ENCODE measurements at regions of chr12 and their contacts with region 1.

Region 1: DNA sequence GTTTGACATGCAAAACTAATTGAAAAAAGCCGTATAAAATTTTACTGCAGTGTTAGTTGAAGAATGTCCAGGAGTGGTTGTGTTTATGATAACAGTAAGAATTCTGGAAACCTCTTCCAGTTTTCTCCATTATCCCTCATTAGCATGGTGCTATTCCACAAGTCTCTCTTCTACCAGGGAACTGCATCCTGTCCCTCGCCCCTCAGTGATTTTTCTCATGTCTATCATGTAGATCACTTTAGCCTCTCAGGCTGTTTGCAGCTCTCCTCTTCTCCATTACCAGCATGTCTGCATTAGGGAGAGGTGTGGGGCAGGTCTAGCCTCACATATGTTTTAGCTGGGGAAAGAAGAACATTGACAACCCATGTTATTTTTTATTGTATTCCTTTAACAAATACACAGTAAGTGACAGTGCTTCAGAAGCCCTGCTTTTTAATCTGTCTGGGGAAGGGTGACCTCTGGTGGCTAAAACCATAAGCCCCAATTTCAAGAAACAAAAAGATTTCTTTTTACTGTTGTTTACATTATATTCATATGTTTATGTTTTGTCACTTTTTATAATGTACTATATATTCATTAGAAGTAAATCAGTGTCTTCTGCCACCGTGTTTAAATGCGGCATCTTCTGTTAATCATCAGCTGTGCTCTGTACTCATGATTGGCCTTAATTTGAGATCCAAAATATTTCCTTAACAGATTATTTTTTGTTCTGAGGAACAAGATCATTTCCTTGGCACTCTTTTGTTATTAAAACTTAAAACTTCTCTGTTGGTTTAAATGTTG is 70.7 kb downstream of the RASSF8 start:
- DNase-seq: peak; percentile 25
- H3K4me3 ChIP-seq: no peak overlapping the region
- H3K27ac ChIP-seq: no peak overlapping the region
- H3K4me1 ChIP-seq: no peaks in the 10 kb centered on the region
- H3K27me3 ChIP-seq: no peaks in the 10 kb centered on the region
- CTCF ChIP-seq: peak; percentile 77 to 82

Region 2: DNA sequence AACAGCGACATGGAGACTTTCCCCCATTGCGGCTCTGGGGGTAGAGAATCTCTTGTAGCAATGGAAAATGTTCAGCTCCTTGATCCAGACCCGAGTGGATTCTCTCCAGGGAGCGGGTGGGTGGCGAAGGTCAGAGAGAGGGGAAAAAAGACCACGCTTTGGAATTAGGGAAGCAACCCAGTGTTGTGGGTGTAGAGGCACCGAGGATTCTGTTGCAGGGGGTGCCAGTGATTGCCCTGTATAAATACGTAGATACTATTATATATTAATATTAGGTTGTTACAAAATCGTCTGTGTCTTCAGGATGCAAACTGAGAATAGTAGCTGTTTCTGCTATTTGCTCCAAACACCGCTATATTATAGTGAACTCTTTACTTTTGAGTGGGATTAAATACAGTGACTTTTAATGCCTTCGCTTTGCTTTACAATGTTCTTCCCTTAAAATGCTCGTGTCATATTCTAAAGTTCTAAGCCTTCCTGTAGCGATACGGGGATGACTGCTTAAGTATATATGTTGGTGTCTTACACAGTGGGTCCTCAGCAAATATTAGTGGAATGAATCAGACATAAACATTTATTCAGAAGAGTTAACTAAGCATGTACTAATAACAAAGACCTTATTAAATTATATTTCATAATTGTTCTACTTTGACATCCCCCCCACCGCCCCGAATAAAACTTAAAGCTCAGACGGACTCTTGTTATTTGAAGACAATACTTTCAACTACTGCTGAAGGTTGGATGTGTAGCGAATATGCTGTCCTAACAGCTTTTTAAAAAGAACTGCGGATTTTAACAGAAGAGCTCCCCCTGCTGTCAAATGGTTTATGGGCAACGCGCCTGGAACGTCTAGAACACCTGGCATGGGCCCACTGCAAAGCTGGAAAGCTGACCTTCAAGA is 642.1 kb before region 1 on chr12:
- CTCF ChIA-PET with region 1: no interaction called
- dilution Hi-C with region 1: no loop called
- in situ Hi-C with region 1: no loop called
- intact Hi-C with region 1: loop called (anchors 1 kb)
- DNase-seq: peak; percentile 72
- H3K4me3 ChIP-seq: peak overlapping the region; percentile 53 to 98 (median 74)
- H3K27ac ChIP-seq: peak overlapping the region; percentile 95
- H3K4me1 ChIP-seq: peaks cover 10% of the 10 kb centered on the region
- H3K27me3 ChIP-seq: no peaks in the 10 kb centered on the region
- CTCF ChIP-seq: peak; percentile 74 to 82

Region 3: GRCh38 chr12:25436203-25437030 is 592.7 kb before region 1 on chr12:
- CTCF ChIA-PET with region 1: no interaction called
- dilution Hi-C with region 1: loop called (anchors 10 kb)
- in situ Hi-C with region 1: loop called (anchors 10 kb)
- intact Hi-C with region 1: loop called (anchors 1 kb)
- DNase-seq: peak; percentile 56
- H3K4me3 ChIP-seq: peak overlapping the region; percentile 3 to 46 (median 24)
- H3K27ac ChIP-seq: peak overlapping the region; percentile 41
- H3K4me1 ChIP-seq: peaks cover 21% of the 10 kb centered on the region
- H3K27me3 ChIP-seq: no peaks in the 10 kb centered on the region
- CTCF ChIP-seq: peak; percentile 80 to 85

Region 4: GRCh38 chr12:25447046-25447445 is 582.1 kb before region 1 on chr12:
- CTCF ChIA-PET with region 1: no interaction called
- dilution Hi-C with region 1: no loop called
- in situ Hi-C with region 1: loop called in 1 of 2 experiments (anchors 10 kb)
- intact Hi-C with region 1: no loop called
- DNase-seq: peak; percentile 22
- H3K4me3 ChIP-seq: no peak overlapping the region
- H3K27ac ChIP-seq: no peak overlapping the region
- H3K4me1 ChIP-seq: no peaks in the 10 kb centered on the region
- H3K27me3 ChIP-seq: no peaks in the 10 kb centered on the region
- CTCF ChIP-seq: no peak

Region 5: DNA sequence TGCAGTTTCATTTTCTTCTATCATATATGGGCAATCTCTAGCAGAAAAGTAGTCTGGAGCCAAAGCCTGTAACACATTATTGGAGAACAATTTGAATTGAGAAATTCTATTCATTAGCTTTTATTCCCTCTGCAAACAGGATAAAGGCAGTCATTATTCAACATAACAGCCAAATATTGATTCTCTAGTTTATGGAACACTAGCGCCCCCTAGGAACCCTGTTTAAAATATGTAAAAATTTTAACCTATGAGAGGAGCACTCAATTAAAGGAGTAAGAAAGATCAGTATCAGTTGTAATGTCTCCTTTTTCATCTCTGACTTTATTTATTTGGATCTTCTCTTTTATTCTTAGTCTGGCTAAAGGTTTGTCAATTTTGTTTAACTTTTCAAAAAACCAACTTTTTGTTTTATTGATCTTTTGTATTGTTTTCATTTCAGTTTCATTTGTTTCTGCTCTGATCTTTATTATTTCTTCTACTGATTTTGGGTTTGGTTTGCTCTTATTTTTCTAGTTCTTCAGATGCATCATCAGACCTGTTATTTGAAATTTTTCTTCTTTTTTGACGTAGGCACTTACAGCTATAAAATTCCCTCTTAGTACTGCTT is 471.2 kb before region 1 on chr12:
- CTCF ChIA-PET with region 1: no interaction called
- dilution Hi-C with region 1: no loop called
- in situ Hi-C with region 1: no loop called
- intact Hi-C with region 1: loop called (anchors 1 kb)
- DNase-seq: peak; percentile 45
- H3K4me3 ChIP-seq: no peak overlapping the region
- H3K27ac ChIP-seq: peak overlapping the region; percentile 4
- H3K4me1 ChIP-seq: no peaks in the 10 kb centered on the region
- H3K27me3 ChIP-seq: no peaks in the 10 kb centered on the region
- CTCF ChIP-seq: peak; percentile 38 to 62

Region 6: DNA sequence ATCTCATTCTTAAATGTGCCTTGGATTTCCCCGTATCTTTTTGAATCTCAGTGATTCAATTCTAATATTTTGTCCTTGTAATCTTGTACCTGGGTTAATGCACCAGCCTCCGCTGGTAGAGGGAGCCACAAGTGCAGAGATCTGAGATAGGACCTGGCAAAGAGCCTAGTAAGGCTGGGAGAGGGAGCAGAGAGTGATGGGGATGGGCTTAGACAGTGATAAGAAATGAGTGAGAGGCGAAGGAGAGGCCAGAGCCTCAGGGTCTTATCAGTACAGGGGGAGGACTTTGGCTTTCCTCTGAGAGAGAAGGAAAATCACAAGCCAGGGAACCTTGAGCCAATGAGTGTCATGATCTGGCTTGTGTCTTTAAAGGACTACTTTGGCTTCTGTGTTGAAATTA is 445.6 kb before region 1 on chr12:
- CTCF ChIA-PET with region 1: no interaction called
- dilution Hi-C with region 1: no loop called
- in situ Hi-C with region 1: loop called in 1 of 2 experiments (anchors 10 kb)
- intact Hi-C with region 1: loop called (anchors 1 kb)
- DNase-seq: no peak
- H3K4me3 ChIP-seq: no peak overlapping the region
- H3K27ac ChIP-seq: no peak overlapping the region
- H3K4me1 ChIP-seq: peaks cover 26% of the 10 kb centered on the region
- H3K27me3 ChIP-seq: no peaks in the 10 kb centered on the region
- CTCF ChIP-seq: peak in 1 of 2 donors; percentile 50

Region 7: DNA sequence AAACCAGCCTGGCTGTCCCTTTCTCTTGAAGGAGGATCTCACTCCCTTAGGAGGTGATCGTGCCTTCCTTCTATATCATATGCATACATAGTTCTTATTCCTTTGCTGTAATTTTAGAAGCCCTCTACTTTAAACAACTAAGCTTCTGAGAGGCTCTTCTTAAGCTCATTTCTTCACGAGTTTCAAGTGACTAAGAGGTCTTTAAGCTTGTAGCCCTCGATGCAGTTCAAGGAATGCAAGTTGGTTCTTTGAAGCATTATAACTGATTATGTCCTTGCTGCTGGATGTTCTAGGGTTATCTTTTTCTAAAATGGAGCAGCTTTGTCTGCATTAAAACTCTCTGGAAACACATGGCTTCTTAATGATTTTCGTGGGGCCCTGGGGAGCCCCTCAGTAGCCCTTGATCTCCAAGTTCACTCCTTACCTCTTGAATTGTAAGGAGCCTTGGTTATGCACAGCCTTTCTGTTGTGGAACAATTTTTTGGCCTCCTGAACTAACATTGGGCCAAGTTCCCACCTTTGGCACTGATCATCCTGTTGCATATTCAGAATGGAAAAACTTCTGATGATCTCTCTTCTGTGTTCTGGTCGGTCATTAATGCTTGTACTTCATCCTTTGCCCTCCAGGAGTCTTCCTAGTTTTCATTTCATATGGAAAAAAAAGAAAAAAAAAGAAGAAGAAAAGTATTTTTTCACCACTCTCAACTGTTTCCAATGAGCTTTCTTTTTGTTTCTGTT is 58.1 kb before region 1 on chr12:
- CTCF ChIA-PET with region 1: no interaction called
- dilution Hi-C with region 1: no loop called
- in situ Hi-C with region 1: loop called in 1 of 2 experiments (anchors 10 kb)
- intact Hi-C with region 1: no loop called
- DNase-seq: no peak
- H3K4me3 ChIP-seq: no peak overlapping the region
- H3K27ac ChIP-seq: no peak overlapping the region
- H3K4me1 ChIP-seq: peaks cover 3% of the 10 kb centered on the region
- H3K27me3 ChIP-seq: no peaks in the 10 kb centered on the region
- CTCF ChIP-seq: peak in 1 of 2 donors; percentile 8